ENCODE measurements at regions of chr10 and their contacts with region 1.

Region 1: DNA sequence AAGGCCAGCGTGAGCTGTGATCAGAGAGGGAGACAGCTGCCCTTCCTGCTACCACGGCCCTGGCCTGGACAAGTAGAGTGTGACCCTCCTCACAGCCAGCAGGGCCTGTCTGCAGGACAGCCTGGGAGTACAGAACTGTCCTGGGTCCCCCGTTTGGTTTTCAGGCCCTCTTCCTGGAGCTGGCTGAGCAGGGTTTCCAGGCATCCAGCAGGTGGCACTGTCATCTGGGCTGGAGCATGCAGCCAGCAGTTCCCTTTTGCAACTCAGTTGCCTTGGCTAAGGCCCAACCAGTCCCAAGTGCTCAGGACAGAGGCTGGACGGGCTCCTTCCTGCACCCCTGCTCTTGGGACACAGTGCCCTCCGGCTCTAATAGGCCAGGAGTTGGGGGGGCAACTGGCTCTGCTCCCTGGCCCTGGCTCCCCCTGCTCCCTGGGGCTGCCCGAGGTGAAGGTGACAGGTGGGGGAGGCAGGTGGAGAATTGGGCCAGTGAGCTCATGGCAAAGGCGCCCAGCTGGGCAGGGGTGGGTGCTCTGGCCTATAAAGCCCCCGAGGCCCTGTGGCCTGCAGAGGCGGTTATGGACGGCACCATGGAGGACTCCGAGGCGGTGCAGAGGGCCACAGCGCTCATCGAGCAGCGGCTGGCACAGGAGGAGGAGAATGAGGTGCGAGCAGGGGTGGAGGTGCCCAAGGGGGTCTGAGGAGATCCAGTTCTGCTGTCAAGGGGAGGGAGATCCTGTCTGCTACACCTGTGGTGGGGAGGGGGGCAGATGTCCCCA is at the start of gene ANKRD2:
- DNase-seq: peak; percentile 81 to 86
- ATAC-seq: peak; percentile 72 to 79
- H3K4me3 ChIP-seq: no peak within 1 kb of the TSS
- H3K27ac ChIP-seq: peak within 1 kb of the TSS; percentile 91 to 93
- H3K4me1 ChIP-seq: peaks cover 63% of the 10 kb centered on the region
- CTCF ChIP-seq: peak; percentile 93
- EP300 ChIP-seq: no peak
- POLR2A ChIP-seq: no peak
- RAD21 ChIP-seq: peak; percentile 95 to 96
- polyA plus RNA-seq, gene ANKRD2: 0.90 and 1.5 TPM in 2 replicates

Region 2: DNA sequence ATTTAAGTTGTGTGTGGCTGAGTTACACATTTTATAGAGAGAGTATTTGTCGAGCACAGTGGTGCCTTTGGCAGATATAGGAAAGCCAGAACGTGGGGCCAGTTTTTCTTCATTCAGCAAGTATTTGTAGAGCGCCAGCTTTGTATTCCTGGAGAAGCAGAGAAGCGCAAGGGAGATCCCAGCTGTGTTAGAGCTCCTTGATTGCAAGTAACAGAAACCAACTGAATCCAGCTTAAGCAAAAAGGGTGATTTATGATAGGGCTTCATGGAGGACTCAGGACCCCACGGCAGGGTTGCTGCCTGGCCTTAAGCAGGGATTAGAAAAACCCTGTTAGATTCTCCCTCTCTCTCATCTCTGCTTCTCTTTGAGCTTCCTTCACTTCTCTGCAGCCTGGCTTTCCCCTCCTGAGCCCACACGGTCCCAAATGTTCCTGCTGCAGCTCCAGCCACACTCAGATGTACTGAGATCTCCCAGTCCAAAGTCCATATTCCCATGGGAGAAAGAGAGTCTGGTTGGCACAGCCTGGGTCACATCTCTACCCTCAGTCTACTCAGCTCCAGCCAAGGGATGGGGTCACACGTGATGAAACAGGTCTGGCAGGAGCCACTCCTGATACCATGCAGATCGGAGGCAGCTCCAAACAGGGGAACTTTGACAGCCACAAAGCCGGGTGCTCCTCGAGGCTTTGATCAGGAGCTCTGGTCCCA is 57.0 kb before region 1 on chr10:
- CTCF ChIA-PET with region 1: interaction called, 14 read pairs
- POLR2A ChIA-PET with region 1: no interaction called
- DNase-seq: no peak
- ATAC-seq: no peak
- H3K4me3 ChIP-seq: no peak overlapping the region
- H3K27ac ChIP-seq: no peak overlapping the region
- H3K4me1 ChIP-seq: peaks cover 14% of the 10 kb centered on the region; the same call in 2 of the 3 replicates
- CTCF ChIP-seq: no peak
- EP300 ChIP-seq: no peak
- POLR2A ChIP-seq: no peak
- RAD21 ChIP-seq: no peak

Region 3: GRCh38 chr10:97543025-97543575 is 29.3 kb before region 1 on chr10:
- CTCF ChIA-PET with region 1: interaction called, 16 read pairs
- POLR2A ChIA-PET with region 1: interaction called, 3 read pairs
- DNase-seq: peak; percentile 76 to 95
- ATAC-seq: peak; percentile 69 to 86
- H3K4me3 ChIP-seq: no peak overlapping the region
- H3K27ac ChIP-seq: peak overlapping the region; percentile 86 to 92
- H3K4me1 ChIP-seq: peaks cover 57% of the 10 kb centered on the region
- CTCF ChIP-seq: no peak
- EP300 ChIP-seq: no peak
- POLR2A ChIP-seq: no peak
- RAD21 ChIP-seq: no peak

Region 4: DNA sequence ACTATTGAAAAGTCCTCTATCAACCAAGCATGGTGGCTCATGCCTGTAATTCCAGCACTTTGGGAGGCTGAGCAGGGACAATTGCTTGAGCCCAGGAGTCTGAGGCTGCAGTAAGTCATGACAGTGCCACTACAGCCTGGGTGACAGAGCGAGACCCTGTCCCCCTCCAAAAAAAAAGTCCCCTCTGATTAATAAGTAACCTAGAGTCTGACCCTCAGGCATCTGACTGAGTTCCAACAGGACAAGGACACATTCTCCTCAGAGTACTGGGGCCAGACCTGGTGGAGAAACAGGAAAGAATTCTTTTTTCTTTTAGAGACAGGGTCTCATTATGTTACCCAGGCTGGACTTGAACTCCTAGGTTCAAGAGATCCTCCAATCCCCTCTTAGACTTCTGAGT is 50.9 kb after region 1 on chr10:
- CTCF ChIA-PET with region 1: interaction called, 1,048 read pairs
- POLR2A ChIA-PET with region 1: no interaction called
- DNase-seq: no peak
- ATAC-seq: no peak
- H3K4me3 ChIP-seq: no peak overlapping the region
- H3K27ac ChIP-seq: no peak overlapping the region
- H3K4me1 ChIP-seq: no peaks in the 10 kb centered on the region; the same call in 2 of the 3 replicates
- CTCF ChIP-seq: no peak
- EP300 ChIP-seq: no peak
- POLR2A ChIP-seq: no peak
- RAD21 ChIP-seq: no peak

Region 5: DNA sequence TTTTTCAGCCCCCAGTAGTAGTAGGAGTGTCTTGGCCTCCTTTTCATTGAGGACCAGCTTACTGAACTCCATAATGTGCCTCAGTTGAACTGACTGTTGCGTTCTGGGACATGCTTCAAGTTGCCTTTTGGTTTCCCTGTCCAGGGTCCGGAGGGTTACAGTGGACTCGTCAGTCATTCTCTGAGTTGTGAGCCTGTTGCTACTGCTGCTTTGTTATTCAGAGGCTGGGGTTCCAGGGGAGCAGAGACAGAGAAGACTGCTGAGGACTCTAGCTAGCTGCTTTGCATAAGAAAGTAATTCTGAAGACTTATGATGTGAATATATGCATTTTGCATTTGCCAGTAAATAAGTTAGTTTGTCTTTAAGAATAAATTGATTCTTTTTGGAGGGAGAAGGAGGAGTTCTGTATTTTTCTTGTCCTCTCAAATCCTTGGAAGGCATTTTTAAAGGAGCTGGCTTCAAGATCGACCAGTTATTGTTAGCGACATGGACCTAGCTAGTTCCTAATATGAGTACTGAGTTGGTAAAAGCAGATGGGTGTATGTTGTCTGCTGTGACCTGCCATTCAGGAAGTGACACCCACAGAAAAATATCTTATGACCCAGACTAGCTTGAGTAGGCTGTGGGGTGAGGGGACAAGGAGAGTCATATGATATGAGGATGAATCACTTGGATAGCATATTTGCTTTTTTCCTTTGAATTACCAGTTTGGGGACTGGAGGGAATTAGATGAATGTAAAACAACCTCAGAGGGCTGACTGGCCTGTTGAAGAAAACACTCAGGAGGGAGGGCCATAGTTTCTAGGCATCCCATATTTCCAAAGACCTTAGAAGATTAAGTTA is 76.4 kb after region 1 on chr10:
- CTCF ChIA-PET with region 1: interaction called, 14 read pairs
- POLR2A ChIA-PET with region 1: interaction called, 5 read pairs
- DNase-seq: peak; percentile 86 to 87
- ATAC-seq: peak; percentile 93 to 94
- H3K4me3 ChIP-seq: no peak overlapping the region
- H3K27ac ChIP-seq: peak overlapping the region; percentile 88 to 91
- H3K4me1 ChIP-seq: peaks cover 58% of the 10 kb centered on the region
- CTCF ChIP-seq: no peak
- EP300 ChIP-seq: peak; percentile 23 to 56; a peak in 2 of 5 replicates
- POLR2A ChIP-seq: no peak
- RAD21 ChIP-seq: 0 out of 5 replicates have a peak, but pooled peaks of 1 of the 2 experiments have one; percentile 21

Region 6: DNA sequence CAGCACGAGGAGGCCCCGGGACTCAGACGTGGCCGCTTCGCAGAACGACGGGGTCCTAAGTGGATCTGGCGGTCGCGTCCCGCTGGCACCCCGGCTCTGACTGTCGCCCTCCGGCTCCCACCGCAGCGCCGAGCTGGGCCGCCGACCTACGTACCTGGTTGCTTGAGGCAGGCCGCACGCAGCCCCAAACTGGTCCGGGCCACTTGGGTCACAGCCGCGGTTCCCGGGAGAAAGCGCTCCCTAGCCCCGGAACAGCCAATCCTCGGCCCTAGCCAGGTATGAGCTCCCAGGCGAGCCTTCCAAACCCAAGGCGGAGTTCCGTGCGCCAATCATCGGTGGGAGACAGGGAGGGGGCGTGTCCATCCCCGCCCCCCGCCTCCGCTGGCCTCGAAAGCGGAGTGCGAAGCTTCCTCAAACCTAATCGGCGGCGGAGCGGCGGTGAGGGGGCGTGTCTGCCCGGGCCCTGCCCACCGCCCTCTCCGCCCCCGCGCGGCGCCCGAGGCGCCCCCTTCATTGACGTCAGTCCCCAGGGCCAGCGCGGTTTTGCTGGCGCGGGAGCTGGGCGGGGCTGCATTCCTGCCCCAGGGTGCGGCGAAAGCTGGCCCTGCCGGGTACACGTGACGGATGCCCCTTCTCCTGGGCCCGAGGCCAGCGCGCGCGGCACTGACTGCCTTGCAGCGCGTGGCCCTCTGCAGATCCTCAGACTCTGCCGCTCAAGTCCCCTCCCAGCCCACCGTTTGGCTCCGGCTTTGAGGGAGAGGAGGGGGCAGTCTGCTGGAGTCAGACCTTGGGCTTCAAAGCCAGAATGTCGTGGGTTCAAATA is 114.8 kb after region 1 on chr10 and contains the start of gene AVPI1:
- CTCF ChIA-PET with region 1: interaction called, 16 read pairs
- POLR2A ChIA-PET with region 1: interaction called, 6 read pairs
- DNase-seq: peak; percentile 95 to 99
- ATAC-seq: peak; percentile 78 to 87
- H3K4me3 ChIP-seq: peak within 1 kb of the TSS; percentile 92
- H3K27ac ChIP-seq: peak within 1 kb of the TSS; percentile 94
- H3K4me1 ChIP-seq: peaks cover 62% of the 10 kb centered on the region
- CTCF ChIP-seq: no peak
- EP300 ChIP-seq: peak; percentile 73 to 94; a peak in 4 of 5 replicates
- POLR2A ChIP-seq: peak; percentile 84
- RAD21 ChIP-seq: no peak
- polyA plus RNA-seq, gene AVPI1: 48.7 and 64.1 TPM in 2 replicates

Measured in A549 (cell line).